A549 (cell line): ENCODE measurements at regions of chr19 and their contacts with region 1.

Region 1: DNA sequence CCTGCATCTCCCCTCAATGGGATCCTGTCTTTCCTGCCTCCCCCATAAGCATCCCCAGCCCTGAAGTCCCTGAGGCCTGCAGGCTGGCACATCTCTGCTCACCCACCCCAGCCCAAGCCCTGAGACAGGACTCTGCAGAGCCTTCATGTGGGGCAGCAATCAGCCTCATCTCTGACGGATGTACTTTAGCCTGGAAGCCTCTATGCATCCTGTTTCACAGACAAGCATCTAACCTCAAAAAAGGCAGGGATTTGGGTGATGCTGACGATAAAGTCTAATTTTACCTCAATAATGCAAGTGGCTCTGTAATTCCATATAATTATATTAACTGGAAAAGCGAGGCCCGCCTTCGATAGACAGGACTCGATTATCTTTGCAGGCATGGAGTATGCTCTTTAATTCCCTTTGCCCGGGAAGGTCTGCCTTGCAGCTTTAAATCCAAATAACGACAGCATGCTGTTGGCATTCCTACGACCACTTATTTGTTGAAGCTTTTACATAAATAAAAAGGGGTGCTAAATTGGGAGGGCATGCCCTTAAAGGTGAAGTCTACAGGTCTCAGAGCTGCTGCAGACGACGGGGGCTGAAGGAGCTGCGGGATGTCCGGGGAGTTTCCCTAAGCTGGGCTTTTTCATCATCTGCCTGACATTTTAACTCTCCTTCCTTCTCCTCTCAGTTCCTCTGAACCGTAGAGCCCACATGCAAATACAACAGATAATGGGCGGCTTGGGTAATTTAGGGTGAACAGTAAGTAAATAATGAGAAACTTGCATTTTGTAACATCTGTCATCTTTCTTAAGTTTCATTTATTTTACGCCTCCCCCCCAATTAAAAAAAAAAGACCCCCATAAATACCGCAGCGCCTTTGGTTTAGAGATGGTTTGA is 211.5 kb downstream of the URI1 start:
- DNase-seq: no peak
- ATAC-seq: peak in 1 of 2 experiments; percentile 3; a peak in 2 of 6 replicates
- H3K4me3 ChIP-seq: no peak overlapping the region
- H3K27ac ChIP-seq: no peak overlapping the region
- H3K4me1 ChIP-seq: peaks cover 16% of the 10 kb centered on the region; the same call in 2 of the 3 replicates
- CTCF ChIP-seq: no peak
- EP300 ChIP-seq: no peak
- POLR2A ChIP-seq: no peak
- RAD21 ChIP-seq: no peak

Region 2: DNA sequence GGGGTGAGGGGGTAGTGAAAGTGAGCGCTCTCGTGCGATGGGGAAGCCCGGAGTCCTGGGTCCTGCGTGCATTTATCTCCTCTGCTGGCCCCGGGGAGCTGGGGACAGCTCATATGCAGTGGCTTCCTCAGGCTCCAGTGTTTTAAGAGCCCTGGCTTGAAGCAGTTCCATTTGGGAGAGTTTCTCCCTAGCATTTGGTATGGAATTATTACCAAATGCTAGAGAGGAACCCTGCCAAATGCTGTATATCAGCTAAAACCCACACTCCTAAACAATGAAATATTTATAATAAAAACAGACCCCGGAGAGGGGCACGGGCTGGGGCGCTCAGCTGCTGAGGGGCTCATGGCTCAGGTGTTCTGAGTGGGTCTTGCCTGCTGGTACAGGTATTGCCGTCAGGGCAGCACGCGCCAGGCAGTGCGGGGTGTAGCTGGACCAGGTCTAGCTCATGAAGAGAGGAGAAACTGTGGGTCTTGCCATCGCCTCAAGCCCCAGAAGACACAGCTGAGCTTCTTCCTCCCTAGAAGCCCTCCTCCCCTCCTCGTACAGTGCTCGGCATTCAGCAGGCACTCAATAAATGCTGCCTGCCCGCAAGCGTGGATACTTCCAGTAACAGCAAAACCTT is 55.0 kb after region 1 on chr19:
- CTCF ChIA-PET with region 1: interaction called, 3 read pairs
- POLR2A ChIA-PET with region 1: interaction called, 11 read pairs
- DNase-seq: no peak
- ATAC-seq: peak in 1 of 2 experiments; percentile 25; a peak in 2 of 6 replicates
- H3K4me3 ChIP-seq: no peak overlapping the region
- H3K27ac ChIP-seq: no peak overlapping the region
- H3K4me1 ChIP-seq: no peaks in the 10 kb centered on the region
- CTCF ChIP-seq: no peak
- EP300 ChIP-seq: no peak
- POLR2A ChIP-seq: no peak
- RAD21 ChIP-seq: no peak